SK-N-SH (cell line): ENCODE measurements at regions of chr17 and their contacts with region 1.

Region 1: DNA sequence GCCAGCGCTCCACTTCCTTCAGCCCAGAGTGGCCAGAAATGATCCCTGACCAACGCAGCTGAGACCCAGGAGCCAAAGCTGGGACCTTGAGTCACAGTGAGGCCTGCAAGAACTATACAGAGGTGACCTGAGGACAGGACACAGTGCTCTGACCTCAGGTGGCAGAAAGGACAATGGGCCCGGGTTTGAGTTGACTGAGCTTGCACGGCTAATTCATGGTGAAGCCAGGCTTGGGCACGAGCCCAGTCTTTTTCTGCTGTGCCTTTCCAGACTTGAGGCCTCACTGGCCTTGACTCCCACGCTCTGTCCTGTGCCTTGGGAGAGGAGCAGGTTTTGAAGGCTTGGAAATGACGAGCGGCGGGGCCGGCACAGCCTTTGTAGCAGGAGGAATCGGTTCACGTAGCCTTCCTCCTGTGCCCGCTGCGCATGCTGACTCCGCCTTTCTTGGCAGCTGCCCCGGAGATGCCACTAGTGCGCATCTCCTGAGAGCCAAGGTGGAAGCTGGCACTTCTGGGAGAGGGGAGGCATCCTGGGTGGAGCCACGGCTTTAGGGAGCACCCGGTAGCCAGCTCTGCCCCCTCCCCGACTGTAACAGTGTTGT is 34.9 kb downstream of the NDEL1 start:
- DNase-seq: no peak
- H3K4me3 ChIP-seq: no peak overlapping the region
- H3K27ac ChIP-seq: no peak overlapping the region
- H3K4me1 ChIP-seq: no peaks in the 10 kb centered on the region; a peak in 2 of 4 replicates
- H3K27me3 ChIP-seq: no peaks in the 10 kb centered on the region
- CTCF ChIP-seq: no peak
- EP300 ChIP-seq: no peak
- RAD21 ChIP-seq: no peak

Region 2: GRCh38 chr17:8481116-8481518 is 10.6 kb after region 1 on chr17:
- CTCF ChIA-PET with region 1: interaction called, 10 read pairs
- POLR2A ChIA-PET with region 1: interaction called, 3 read pairs
- DNase-seq: no peak
- H3K4me3 ChIP-seq: no peak overlapping the region
- H3K27ac ChIP-seq: no peak overlapping the region
- H3K4me1 ChIP-seq: no peaks in the 10 kb centered on the region
- H3K27me3 ChIP-seq: no peaks in the 10 kb centered on the region
- CTCF ChIP-seq: no peak
- EP300 ChIP-seq: no peak
- RAD21 ChIP-seq: no peak